ENCODE measurements at regions of chr19 and their contacts with region 1.

Region 1: DNA sequence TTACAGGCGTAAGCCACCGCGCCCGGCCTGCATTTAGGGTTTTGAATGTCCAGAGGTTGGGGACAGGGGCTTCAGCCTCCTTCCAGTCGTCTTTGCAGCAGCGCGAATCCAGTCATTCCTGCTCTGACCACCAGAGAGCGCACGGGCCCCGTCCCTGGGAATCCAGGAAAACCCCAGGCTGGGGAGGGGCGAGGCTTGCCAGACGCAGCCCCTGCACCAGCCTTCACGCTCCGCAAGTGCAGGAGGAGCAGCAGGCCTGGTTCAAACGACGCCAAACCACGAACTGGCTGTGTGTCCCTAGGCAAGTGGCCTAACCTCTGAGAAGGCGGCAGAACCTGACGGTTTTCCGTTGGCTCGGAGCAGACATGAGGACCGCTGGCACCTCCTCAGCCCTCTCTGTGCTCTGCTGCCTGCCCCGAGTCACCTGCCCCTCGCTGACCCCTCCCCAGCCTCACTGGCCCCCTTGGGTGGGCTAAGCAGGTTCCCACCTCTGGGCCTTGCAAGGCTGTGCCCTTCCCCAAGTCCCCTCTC is 2.0 kb upstream of the RNF126 start:
- DNase-seq: peak; percentile 78 to 80 (median 78)
- ATAC-seq: peak; percentile 12 to 34 (median 26)
- H3K4me3 ChIP-seq: peak overlapping the region in 1 of 3 donors; percentile 6
- H3K27ac ChIP-seq: no peak overlapping the region
- H3K4me1 ChIP-seq: peaks cover 0 to 24% (median 10%) of the 10 kb centered on the region in 4 donors
- H3K27me3 ChIP-seq: no peaks in the 10 kb centered on the region
- CTCF ChIP-seq: peak; percentile 87 to 95 (median 92)
- POLR2A ChIP-seq: no peak

Region 2: GRCh38 chr19:708154-709143 is 43.5 kb after region 1 on chr19 and contains the start of gene PALM:
- intact Hi-C with region 1: no loop called
- DNase-seq: no peak
- ATAC-seq: no peak
- H3K4me3 ChIP-seq: peak within 1 kb of the TSS; percentile 27 to 44 (median 33)
- H3K27ac ChIP-seq: peak within 1 kb of the TSS; percentile 21 to 57 (median 40)
- H3K4me1 ChIP-seq: no peaks in the 10 kb centered on the region
- H3K27me3 ChIP-seq: no peaks in the 10 kb centered on the region
- CTCF ChIP-seq: peak in 1 of 4 donors; percentile 16
- POLR2A ChIP-seq: no peak
- total RNA-seq, gene PALM: 4.6 to 12.7 (median 7.1) TPM

Region 3: DNA sequence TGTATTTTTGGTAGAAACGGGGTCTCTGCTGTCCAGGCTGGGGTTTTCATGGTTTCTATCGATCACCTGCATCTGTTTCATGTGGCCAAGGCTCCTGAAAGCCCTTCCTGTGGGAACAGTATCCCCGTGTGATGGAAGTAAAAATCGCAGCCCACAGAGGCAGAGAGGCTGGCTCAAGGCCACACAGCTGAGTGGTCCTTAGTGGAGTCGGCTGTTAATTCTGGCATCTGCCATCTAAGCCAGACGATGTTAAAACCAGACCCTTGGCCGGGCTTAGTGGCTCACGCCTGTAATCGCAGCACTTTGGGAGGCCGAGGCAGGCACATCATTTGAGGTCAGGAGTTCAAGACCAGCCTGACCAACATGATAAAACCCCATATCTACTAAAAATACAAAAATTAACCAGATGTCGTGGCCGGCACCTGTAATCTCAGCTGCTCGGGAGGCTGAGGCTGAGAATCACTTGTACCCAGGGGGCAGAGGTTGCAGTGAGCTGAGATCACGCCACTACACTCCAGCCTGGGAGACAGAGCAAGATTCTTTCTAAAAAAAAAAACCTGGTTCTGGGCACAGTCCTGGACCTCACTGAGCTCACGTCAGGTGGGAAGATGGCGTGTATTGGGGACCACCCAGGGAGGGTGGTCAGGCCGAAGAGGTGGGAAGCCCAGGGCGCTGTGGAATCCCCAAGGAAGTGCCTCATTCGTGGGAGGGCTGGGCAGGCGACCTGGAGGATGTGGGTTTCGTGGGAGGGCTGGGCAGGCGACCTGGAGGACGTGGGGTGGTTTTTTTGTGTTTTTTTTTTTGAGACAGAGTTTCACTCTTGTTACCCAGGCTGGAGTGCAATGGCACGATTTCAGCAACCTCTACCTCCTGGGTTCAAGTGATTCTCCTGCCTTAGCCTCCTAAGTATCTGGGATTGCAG is 67.4 kb after region 1 on chr19:
- intact Hi-C with region 1: loop called (anchors 5 kb)
- DNase-seq: no peak
- ATAC-seq: no peak
- H3K4me3 ChIP-seq: no peak overlapping the region
- H3K27ac ChIP-seq: no peak overlapping the region
- H3K4me1 ChIP-seq: no peaks in the 10 kb centered on the region
- H3K27me3 ChIP-seq: no peaks in the 10 kb centered on the region
- CTCF ChIP-seq: no peak
- POLR2A ChIP-seq: no peak